ENCODE measurements at regions of chr4 and their contacts with region 1.

Region 1: GRCh38 chr4:121156822-121157769 is 7.0 kb downstream of the TNIP3 start:
- DNase-seq: peak in 7 of 9 experiments; percentile 14 to 65 (median 35)
- ATAC-seq: peak; percentile 48
- H3K4me3 ChIP-seq: peak overlapping the region; percentile 54 to 61
- H3K4me3 Mint-ChIP-seq: peak overlapping the region; percentile 96
- H3K27ac ChIP-seq: peak overlapping the region; percentile 29
- H3K27ac Mint-ChIP-seq: peak overlapping the region; percentile 96
- H3K4me1 ChIP-seq: peaks cover 49% of the 10 kb centered on the region
- H3K4me1 Mint-ChIP-seq: peaks cover 53% of the 10 kb centered on the region
- H3K27me3 ChIP-seq: no peaks in the 10 kb centered on the region
- H3K27me3 Mint-ChIP-seq: no peaks in the 10 kb centered on the region
- CTCF ChIP-seq: no peak

Region 2: GRCh38 chr4:121112530-121112929 is 44.6 kb before region 1 on chr4:
- CTCF ChIA-PET with region 1: no interaction called
- POLR2A ChIA-PET with region 1: no interaction called
- intact Hi-C with region 1: loop called in 1 of 2 experiments (anchors 5 kb)
- DNase-seq: peak in 2 of 9 experiments; percentile 6 to 26
- ATAC-seq: no peak
- H3K4me3 ChIP-seq: no peak overlapping the region
- H3K4me3 Mint-ChIP-seq: no peak overlapping the region
- H3K27ac ChIP-seq: no peak overlapping the region
- H3K27ac Mint-ChIP-seq: no peak overlapping the region
- H3K4me1 ChIP-seq: no peaks in the 10 kb centered on the region
- H3K4me1 Mint-ChIP-seq: peaks cover 13% of the 10 kb centered on the region
- H3K27me3 ChIP-seq: no peaks in the 10 kb centered on the region
- H3K27me3 Mint-ChIP-seq: no peaks in the 10 kb centered on the region
- CTCF ChIP-seq: peak; percentile 73

Region 3: DNA sequence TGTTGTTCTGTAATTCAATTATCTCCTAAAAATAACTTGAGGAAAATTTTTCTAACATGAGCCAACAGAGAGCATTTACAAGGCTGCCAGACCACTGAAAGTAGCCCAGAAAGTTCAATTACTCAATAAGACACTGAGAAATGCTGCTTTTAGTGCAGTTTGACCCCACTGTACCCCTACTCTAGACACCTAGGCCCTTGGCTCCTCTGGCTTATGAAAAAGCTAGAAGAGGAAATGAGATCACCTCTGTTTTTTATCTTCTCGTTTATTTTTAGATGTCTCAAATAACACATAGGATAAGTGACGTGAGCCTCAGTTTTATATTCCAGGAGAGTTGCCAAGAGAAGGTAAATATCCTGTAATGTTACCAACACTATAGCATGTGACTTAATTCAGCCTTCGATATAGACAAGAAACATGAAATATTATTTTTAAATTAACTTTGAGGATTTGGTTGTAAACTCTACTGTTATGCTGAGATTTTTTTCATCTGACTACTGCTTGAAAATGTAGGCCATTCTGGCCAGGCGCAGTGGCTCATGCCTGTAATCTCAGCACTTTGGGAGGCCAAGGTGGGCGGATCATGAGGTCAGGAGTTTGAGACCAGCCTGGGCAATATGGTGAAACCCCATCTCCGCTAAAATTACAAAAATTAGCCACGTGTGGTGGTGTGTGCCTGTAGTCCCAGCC is 17.4 kb before region 1 on chr4:
- CTCF ChIA-PET with region 1: interaction called, 3 read pairs
- POLR2A ChIA-PET with region 1: interaction called, 3 read pairs
- intact Hi-C with region 1: loop called in 1 of 2 experiments (anchors 2 kb)
- DNase-seq: peak in 2 of 9 experiments; percentile 27 to 68
- ATAC-seq: peak; percentile 78
- H3K4me3 ChIP-seq: no peak overlapping the region
- H3K4me3 Mint-ChIP-seq: peak overlapping the region; percentile 3
- H3K27ac ChIP-seq: peak overlapping the region; percentile 65 to 72
- H3K27ac Mint-ChIP-seq: peak overlapping the region; percentile 88
- H3K4me1 ChIP-seq: peaks cover 35% of the 10 kb centered on the region
- H3K4me1 Mint-ChIP-seq: peaks cover 50% of the 10 kb centered on the region
- H3K27me3 ChIP-seq: no peaks in the 10 kb centered on the region
- H3K27me3 Mint-ChIP-seq: no peaks in the 10 kb centered on the region
- CTCF ChIP-seq: no peak

Region 4: GRCh38 chr4:121182296-121182695 is 25.2 kb after region 1 on chr4:
- CTCF ChIA-PET with region 1: interaction called, 4 read pairs
- POLR2A ChIA-PET with region 1: interaction called, 7 read pairs
- intact Hi-C with region 1: loop called (anchors 2 kb)
- DNase-seq: peak in 2 of 9 experiments; percentile 60 to 77
- ATAC-seq: peak; percentile 72
- H3K4me3 ChIP-seq: peak overlapping the region; percentile 53 to 57
- H3K4me3 Mint-ChIP-seq: peak overlapping the region; percentile 88
- H3K27ac ChIP-seq: peak overlapping the region; percentile 78 to 94
- H3K27ac Mint-ChIP-seq: peak overlapping the region; percentile 97
- H3K4me1 ChIP-seq: peaks cover 54% of the 10 kb centered on the region
- H3K4me1 Mint-ChIP-seq: peaks cover 82% of the 10 kb centered on the region
- H3K27me3 ChIP-seq: no peaks in the 10 kb centered on the region
- H3K27me3 Mint-ChIP-seq: no peaks in the 10 kb centered on the region
- CTCF ChIP-seq: no peak

Region 5: DNA sequence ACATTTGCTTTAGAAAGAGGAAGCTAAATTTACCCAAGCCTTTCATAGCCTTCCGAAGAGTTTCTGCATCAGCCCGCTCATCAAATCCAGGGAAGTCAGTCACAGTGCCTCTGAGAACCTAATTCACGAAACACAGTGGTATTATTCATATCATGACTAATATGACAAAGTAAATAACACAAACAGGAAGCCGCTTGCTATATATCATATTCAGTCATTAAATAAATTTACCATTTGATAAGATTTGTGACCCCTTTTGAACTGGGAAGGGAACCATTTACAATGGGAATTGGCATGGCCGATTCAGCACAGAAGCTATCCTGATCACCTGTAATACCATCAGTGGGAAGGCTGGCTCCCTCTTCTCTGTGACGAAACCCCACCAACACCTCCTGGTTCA is 529.2 kb after region 1 on chr4:
- CTCF ChIA-PET with region 1: no interaction called
- POLR2A ChIA-PET with region 1: no interaction called
- intact Hi-C with region 1: no loop called
- DNase-seq: no peak
- ATAC-seq: no peak
- H3K4me3 ChIP-seq: no peak overlapping the region
- H3K4me3 Mint-ChIP-seq: no peak overlapping the region
- H3K27ac ChIP-seq: no peak overlapping the region
- H3K27ac Mint-ChIP-seq: no peak overlapping the region
- H3K4me1 ChIP-seq: no peaks in the 10 kb centered on the region
- H3K4me1 Mint-ChIP-seq: peaks cover 2% of the 10 kb centered on the region
- H3K27me3 ChIP-seq: no peaks in the 10 kb centered on the region
- H3K27me3 Mint-ChIP-seq: no peaks in the 10 kb centered on the region
- CTCF ChIP-seq: no peak

Measured in CD8-positive, alpha-beta T cell (primary cell).